PC-9 (cell line): ENCODE measurements at regions of chr16 and their contacts with region 1.

Region 1: DNA sequence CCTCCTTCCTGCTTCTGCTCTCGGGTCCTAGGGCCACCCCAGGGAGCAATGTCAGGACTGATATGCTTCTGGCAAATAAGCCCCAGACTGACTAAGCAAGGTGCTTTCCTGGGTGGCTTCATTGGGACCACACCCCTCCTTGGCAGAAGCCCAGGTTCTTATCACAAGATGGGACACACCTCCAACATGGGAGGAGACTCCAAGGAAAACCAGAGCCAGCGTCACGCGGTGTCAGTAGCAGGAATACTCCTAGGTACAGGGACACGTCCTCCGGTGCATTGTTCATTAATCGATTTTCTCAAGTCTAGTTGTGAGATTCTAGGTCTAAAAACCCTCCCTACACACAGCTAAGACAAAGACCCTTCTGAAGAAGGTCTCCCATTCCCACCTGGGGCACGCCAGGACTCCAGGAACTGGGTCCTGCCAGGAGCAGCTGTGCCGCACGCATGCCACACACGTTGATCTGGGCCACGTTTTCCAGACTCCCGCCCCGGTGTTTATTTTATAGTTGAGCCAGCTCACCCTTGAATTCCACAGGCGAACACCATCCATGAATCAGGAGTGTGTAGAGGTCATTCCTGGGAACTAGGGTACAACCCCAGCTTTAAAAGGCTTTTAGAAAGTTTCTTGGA is 30.8 kb downstream of the FA2H start:
- DNase-seq: peak; percentile 94 to 97
- H3K4me3 ChIP-seq: peak overlapping the region; percentile 44; the same call in 1 of the 2 replicates
- H3K27ac ChIP-seq: peak overlapping the region; percentile 91
- H3K4me1 ChIP-seq: peaks cover 49% of the 10 kb centered on the region
- H3K27me3 ChIP-seq: no peaks in the 10 kb centered on the region
- CTCF ChIP-seq: no peak

Region 2: GRCh38 chr16:74666425-74667254 is 77.1 kb before region 1 on chr16 and contains the start of gene RFWD3:
- CTCF ChIA-PET with region 1: no interaction called
- POLR2A ChIA-PET with region 1: interaction called, 13 read pairs
- intact Hi-C with region 1: no loop called
- DNase-seq: peak; percentile 94 to 97
- H3K4me3 ChIP-seq: peak within 1 kb of the TSS; percentile 100
- H3K27ac ChIP-seq: peak within 1 kb of the TSS; percentile 53
- H3K4me1 ChIP-seq: peaks cover 8% of the 10 kb centered on the region; the same call in 1 of the 2 replicates
- H3K27me3 ChIP-seq: no peaks in the 10 kb centered on the region
- CTCF ChIP-seq: no peak
- total RNA-seq, gene RFWD3: 49.5 and 58.0 TPM in 2 replicates

Region 3: DNA sequence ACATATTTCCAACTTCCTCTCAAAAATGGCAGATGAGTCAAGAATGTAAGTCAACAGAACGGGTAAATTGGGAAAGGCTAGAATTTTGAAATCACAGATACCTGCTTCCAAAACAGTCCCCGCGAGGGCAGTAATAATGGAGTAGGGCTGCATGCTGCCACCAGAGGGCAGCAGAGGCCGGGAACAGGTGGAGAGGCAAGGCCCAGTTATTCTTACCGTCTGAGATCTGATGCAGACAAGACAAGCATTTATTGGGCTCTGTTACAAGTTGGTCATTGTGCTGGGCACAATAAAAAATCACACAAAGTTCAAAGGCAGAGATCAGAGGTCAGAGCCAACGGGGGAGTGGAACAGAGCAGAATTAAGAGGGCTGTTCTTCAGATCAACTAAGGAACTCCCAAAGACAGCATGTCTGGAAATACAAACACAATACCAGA is 34.3 kb before region 1 on chr16:
- CTCF ChIA-PET with region 1: no interaction called
- POLR2A ChIA-PET with region 1: interaction called, 19 read pairs
- intact Hi-C with region 1: loop called (anchors 5 kb)
- DNase-seq: peak; percentile 79 to 81
- H3K4me3 ChIP-seq: no peak overlapping the region
- H3K27ac ChIP-seq: no peak overlapping the region
- H3K4me1 ChIP-seq: peaks cover 4% of the 10 kb centered on the region; the same call in 1 of the 2 replicates
- H3K27me3 ChIP-seq: no peaks in the 10 kb centered on the region
- CTCF ChIP-seq: peak; percentile 98

Region 4: DNA sequence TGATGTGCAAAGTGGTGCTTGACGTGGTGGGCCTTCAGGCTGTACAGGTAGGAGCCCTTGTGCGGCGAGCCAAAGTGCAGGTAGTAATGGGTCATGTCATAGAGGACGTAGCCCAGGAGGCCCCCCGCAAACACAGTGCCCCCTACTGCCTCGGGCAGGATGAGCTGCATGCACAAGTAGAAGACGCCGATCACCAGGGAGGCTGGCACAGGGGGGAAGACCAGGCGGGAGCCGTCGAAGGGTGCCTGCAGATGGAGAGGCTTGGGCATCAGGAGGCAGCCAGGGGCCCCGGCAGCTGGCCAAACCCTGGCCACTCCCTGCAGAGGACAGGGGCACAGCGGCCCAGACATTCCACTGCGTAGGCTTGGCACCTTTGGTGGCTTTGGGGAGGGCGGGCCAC is 27.4 kb before region 1 on chr16:
- CTCF ChIA-PET with region 1: no interaction called
- POLR2A ChIA-PET with region 1: interaction called, 19 read pairs
- intact Hi-C with region 1: no loop called
- DNase-seq: no peak
- H3K4me3 ChIP-seq: no peak overlapping the region
- H3K27ac ChIP-seq: no peak overlapping the region
- H3K4me1 ChIP-seq: no peaks in the 10 kb centered on the region
- H3K27me3 ChIP-seq: no peaks in the 10 kb centered on the region
- CTCF ChIP-seq: no peak

Region 5: DNA sequence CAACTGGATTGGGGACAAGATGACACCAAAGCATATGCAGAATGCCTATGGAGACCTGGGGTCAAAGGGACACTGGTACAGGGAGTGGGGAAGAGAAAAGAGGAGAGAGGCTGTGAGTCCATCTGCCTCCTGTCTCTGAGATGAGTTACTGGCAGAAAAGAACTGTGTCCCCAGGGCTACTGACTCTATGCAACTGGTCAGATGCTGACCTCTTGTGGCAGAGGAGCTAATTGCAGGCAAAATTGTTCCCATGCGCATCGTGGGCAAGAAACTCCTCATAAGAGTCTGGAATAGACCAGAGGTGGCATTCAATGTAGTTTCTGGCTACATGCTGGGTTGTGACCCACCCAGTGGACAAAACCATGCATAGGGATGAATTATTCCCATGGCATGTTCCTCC is 17.1 kb before region 1 on chr16:
- CTCF ChIA-PET with region 1: interaction called, 12 read pairs
- POLR2A ChIA-PET with region 1: no interaction called
- intact Hi-C with region 1: loop called (anchors 1 kb)
- DNase-seq: no peak
- H3K4me3 ChIP-seq: no peak overlapping the region
- H3K27ac ChIP-seq: no peak overlapping the region
- H3K4me1 ChIP-seq: peaks cover 24% of the 10 kb centered on the region
- H3K27me3 ChIP-seq: no peaks in the 10 kb centered on the region
- CTCF ChIP-seq: peak; percentile 73

Region 6: GRCh38 chr16:74892574-74893461 is 149.0 kb after region 1 on chr16:
- CTCF ChIA-PET with region 1: no interaction called
- POLR2A ChIA-PET with region 1: no interaction called
- intact Hi-C with region 1: no loop called
- DNase-seq: no peak
- H3K4me3 ChIP-seq: no peak overlapping the region
- H3K27ac ChIP-seq: no peak overlapping the region
- H3K4me1 ChIP-seq: 0 out of 2 replicates have a peak, but pooled peaks cover 4% of the 10 kb centered on the region
- H3K27me3 ChIP-seq: no peaks in the 10 kb centered on the region
- CTCF ChIP-seq: no peak

Region 7: DNA sequence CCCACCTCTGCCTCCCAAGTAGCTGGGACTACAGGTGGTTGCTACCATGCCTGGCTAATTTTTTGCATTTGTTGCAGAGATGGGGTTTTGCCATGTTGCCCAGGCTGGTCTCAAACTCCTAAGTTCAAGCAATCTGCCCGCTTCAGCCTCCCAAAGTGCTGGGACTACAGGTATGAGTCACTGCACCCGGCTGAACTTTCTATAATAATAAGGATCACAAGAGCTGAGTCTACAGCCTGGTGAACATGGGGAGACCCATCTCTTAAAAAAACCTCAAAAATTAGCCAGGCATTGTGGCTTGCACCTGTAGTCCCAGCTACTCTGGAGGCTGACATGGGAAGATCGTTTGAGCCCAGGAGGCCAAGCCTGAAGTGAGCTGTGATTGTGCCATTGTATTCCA is 187.7 kb after region 1 on chr16:
- CTCF ChIA-PET with region 1: no interaction called
- POLR2A ChIA-PET with region 1: no interaction called
- intact Hi-C with region 1: no loop called
- DNase-seq: no peak
- H3K4me3 ChIP-seq: no peak overlapping the region
- H3K27ac ChIP-seq: no peak overlapping the region
- H3K4me1 ChIP-seq: no peaks in the 10 kb centered on the region
- H3K27me3 ChIP-seq: no peaks in the 10 kb centered on the region
- CTCF ChIP-seq: no peak